IMR-90 (cell line): ENCODE measurements at regions of chr4 and their contacts with region 1.

Region 1: GRCh38 chr4:6349896-6350603 is 80.4 kb downstream of the WFS1 start:
- DNase-seq: peak; percentile 10
- ATAC-seq: no peak
- H3K4me3 ChIP-seq: no peak overlapping the region
- H3K27ac ChIP-seq: no peak overlapping the region
- H3K4me1 ChIP-seq: no peaks in the 10 kb centered on the region
- H3K27me3 ChIP-seq: peaks cover 13% of the 10 kb centered on the region
- CTCF ChIP-seq: no peak
- POLR2A ChIP-seq: no peak
- RAD21 ChIP-seq: no peak

Region 2: GRCh38 chr4:6269616-6270511 is 80.2 kb before region 1 on chr4 and contains the start of gene WFS1:
- CTCF ChIA-PET with region 1: no interaction called
- POLR2A ChIA-PET with region 1: interaction called, 10 read pairs
- dilution Hi-C with region 1: no loop called
- in situ Hi-C with region 1: no loop called
- intact Hi-C with region 1: no loop called
- DNase-seq: peak; percentile 97
- ATAC-seq: peak; percentile 97
- H3K4me3 ChIP-seq: peak within 1 kb of the TSS; percentile 90
- H3K27ac ChIP-seq: peak within 1 kb of the TSS; percentile 70
- H3K4me1 ChIP-seq: peaks cover 29% of the 10 kb centered on the region
- H3K27me3 ChIP-seq: peaks cover 2% of the 10 kb centered on the region; the same call in 1 of the 2 replicates
- CTCF ChIP-seq: no peak
- POLR2A ChIP-seq: 0 out of 2 replicates have a peak, but pooled peaks have one; percentile 48
- RAD21 ChIP-seq: no peak
- total RNA-seq, gene WFS1: 9.7 TPM in 2 replicates

Region 3: GRCh38 chr4:6574747-6575502 is 224.9 kb after region 1 on chr4 and contains the start of gene MAN2B2:
- CTCF ChIA-PET with region 1: no interaction called
- POLR2A ChIA-PET with region 1: no interaction called
- dilution Hi-C with region 1: no loop called
- in situ Hi-C with region 1: no loop called
- intact Hi-C with region 1: no loop called
- DNase-seq: peak; percentile 63
- ATAC-seq: peak; percentile 100
- H3K4me3 ChIP-seq: peak within 1 kb of the TSS; percentile 90
- H3K27ac ChIP-seq: peak within 1 kb of the TSS; percentile 74
- H3K4me1 ChIP-seq: peaks cover 8% of the 10 kb centered on the region; the same call in 1 of the 2 replicates
- H3K27me3 ChIP-seq: peaks cover 14% of the 10 kb centered on the region
- CTCF ChIP-seq: 0 out of 2 replicates have a peak, but pooled peaks have one; percentile 7
- POLR2A ChIP-seq: peak; percentile 62
- RAD21 ChIP-seq: 0 out of 2 replicates have a peak, but pooled peaks have one; percentile 12
- total RNA-seq, gene MAN2B2: 11.9 and 13.4 TPM in 2 replicates